Lower leg skin (tissue), 4 donors: ENCODE measurements at regions of chr2 and their contacts with region 1.

Region 1: DNA sequence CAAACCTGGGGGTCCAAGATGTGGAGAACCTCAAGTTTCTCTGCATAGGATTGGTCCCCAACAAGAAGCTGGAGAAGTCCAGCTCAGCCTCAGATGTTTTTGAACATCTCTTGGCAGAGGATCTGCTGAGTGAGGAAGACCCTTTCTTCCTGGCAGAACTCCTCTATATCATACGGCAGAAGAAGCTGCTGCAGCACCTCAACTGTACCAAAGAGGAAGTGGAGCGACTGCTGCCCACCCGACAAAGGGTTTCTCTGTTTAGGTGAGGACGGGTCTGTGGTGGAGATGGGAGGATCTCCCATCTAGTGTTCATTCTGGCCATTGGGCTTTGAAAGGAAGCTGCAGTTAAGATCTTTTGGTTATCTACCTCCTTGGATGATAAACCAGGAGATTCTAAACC is 2.9 kb downstream of the CASP10 start:
- DNase-seq: no peak
- H3K4me3 ChIP-seq: no peak overlapping the region
- CTCF ChIP-seq: no peak
- POLR2A ChIP-seq: no peak

Region 2: GRCh38 chr2:200523158-200523557 is 662.7 kb before region 1 on chr2:
- intact Hi-C with region 1: no loop called
- DNase-seq: no peak
- H3K4me3 ChIP-seq: no peak overlapping the region
- CTCF ChIP-seq: no peak
- POLR2A ChIP-seq: no peak

Region 3: GRCh38 chr2:201084863-201085262 is 101.0 kb before region 1 on chr2:
- intact Hi-C with region 1: no loop called
- DNase-seq: no peak
- H3K4me3 ChIP-seq: no peak overlapping the region
- CTCF ChIP-seq: no peak
- POLR2A ChIP-seq: no peak

Region 4: GRCh38 chr2:201215963-201216362 is 30.1 kb after region 1 on chr2:
- intact Hi-C with region 1: loop called (anchors 1 kb)
- DNase-seq: no peak
- H3K4me3 ChIP-seq: no peak overlapping the region
- CTCF ChIP-seq: no peak
- POLR2A ChIP-seq: no peak